ENCODE measurements at regions of chr19 and their contacts with region 1.

Region 1: GRCh38 chr19:2096480-2097329 is at the start of gene IZUMO4:
- DNase-seq: peak; percentile 98 to 100 (median 99)
- ATAC-seq: peak; percentile 90
- H3K4me3 ChIP-seq: peak within 1 kb of the TSS; percentile 82
- H3K4me3 Mint-ChIP-seq: peak within 1 kb of the TSS; percentile 95 to 98 (median 97)
- H3K27ac ChIP-seq: peak within 1 kb of the TSS; percentile 88
- H3K27ac Mint-ChIP-seq: peak within 1 kb of the TSS; percentile 90 to 98 (median 94)
- H3K4me1 ChIP-seq: peaks cover 13% of the 10 kb centered on the region in 2 donors
- H3K4me1 Mint-ChIP-seq: peaks cover 15 to 37% (median 27%) of the 10 kb centered on the region in 7 donors
- H3K27me3 ChIP-seq: no peaks in the 10 kb centered on the region
- H3K27me3 Mint-ChIP-seq: no peaks in the 10 kb centered on the region
- total RNA-seq, gene IZUMO4: 12.2 to 26.8 (median 15.7) TPM

Region 2: GRCh38 chr19:1863726-1864480 is 232.8 kb before region 1 on chr19:
- CTCF ChIA-PET with region 1: no interaction called
- POLR2A ChIA-PET with region 1: no interaction called
- intact Hi-C with region 1: loop called in 1 of 2 experiments (anchors 1 kb)
- DNase-seq: peak; percentile 89 to 96 (median 94)
- ATAC-seq: peak; percentile 84
- H3K4me3 ChIP-seq: peak overlapping the region; percentile 79
- H3K4me3 Mint-ChIP-seq: peak overlapping the region; percentile 38 to 82 (median 73)
- H3K27ac ChIP-seq: peak overlapping the region; percentile 78
- H3K27ac Mint-ChIP-seq: peak overlapping the region; percentile 15 to 86 (median 76)
- H3K4me1 ChIP-seq: peaks cover 13 to 32% of the 10 kb centered on the region in 2 donors
- H3K4me1 Mint-ChIP-seq: peaks cover 6 to 46% (median 32%) of the 10 kb centered on the region in 7 donors
- H3K27me3 ChIP-seq: no peaks in the 10 kb centered on the region
- H3K27me3 Mint-ChIP-seq: no peaks in the 10 kb centered on the region

Region 3: GRCh38 chr19:1992759-1993260 is 103.9 kb before region 1 on chr19:
- CTCF ChIA-PET with region 1: no interaction called
- POLR2A ChIA-PET with region 1: no interaction called
- intact Hi-C with region 1: no loop called
- DNase-seq: no peak
- ATAC-seq: no peak
- H3K4me3 ChIP-seq: no peak overlapping the region
- H3K4me3 Mint-ChIP-seq: no peak overlapping the region
- H3K27ac ChIP-seq: no peak overlapping the region
- H3K27ac Mint-ChIP-seq: no peak overlapping the region
- H3K4me1 ChIP-seq: no peaks in the 10 kb centered on the region
- H3K4me1 Mint-ChIP-seq: peaks cover 0 to 4% (median 0%) of the 10 kb centered on the region in 7 donors
- H3K27me3 ChIP-seq: no peaks in the 10 kb centered on the region
- H3K27me3 Mint-ChIP-seq: no peaks in the 10 kb centered on the region

Region 4: GRCh38 chr19:2016041-2016807 is 80.5 kb before region 1 on chr19:
- CTCF ChIA-PET with region 1: interaction called, 4 read pairs
- POLR2A ChIA-PET with region 1: interaction called, 9 read pairs
- intact Hi-C with region 1: loop called (anchors 1 kb)
- DNase-seq: peak in 7 of 9 donors; percentile 26 to 78 (median 56)
- ATAC-seq: peak; percentile 65
- H3K4me3 ChIP-seq: no peak overlapping the region
- H3K4me3 Mint-ChIP-seq: peak overlapping the region in 9 of 10 donors; percentile 48 to 79 (median 59)
- H3K27ac ChIP-seq: peak overlapping the region; percentile 37
- H3K27ac Mint-ChIP-seq: peak overlapping the region in 8 of 9 donors; percentile 29 to 81 (median 60)
- H3K4me1 ChIP-seq: no peaks in the 10 kb centered on the region
- H3K4me1 Mint-ChIP-seq: peaks cover 4 to 28% (median 16%) of the 10 kb centered on the region in 7 donors
- H3K27me3 ChIP-seq: no peaks in the 10 kb centered on the region
- H3K27me3 Mint-ChIP-seq: no peaks in the 10 kb centered on the region

Region 5: DNA sequence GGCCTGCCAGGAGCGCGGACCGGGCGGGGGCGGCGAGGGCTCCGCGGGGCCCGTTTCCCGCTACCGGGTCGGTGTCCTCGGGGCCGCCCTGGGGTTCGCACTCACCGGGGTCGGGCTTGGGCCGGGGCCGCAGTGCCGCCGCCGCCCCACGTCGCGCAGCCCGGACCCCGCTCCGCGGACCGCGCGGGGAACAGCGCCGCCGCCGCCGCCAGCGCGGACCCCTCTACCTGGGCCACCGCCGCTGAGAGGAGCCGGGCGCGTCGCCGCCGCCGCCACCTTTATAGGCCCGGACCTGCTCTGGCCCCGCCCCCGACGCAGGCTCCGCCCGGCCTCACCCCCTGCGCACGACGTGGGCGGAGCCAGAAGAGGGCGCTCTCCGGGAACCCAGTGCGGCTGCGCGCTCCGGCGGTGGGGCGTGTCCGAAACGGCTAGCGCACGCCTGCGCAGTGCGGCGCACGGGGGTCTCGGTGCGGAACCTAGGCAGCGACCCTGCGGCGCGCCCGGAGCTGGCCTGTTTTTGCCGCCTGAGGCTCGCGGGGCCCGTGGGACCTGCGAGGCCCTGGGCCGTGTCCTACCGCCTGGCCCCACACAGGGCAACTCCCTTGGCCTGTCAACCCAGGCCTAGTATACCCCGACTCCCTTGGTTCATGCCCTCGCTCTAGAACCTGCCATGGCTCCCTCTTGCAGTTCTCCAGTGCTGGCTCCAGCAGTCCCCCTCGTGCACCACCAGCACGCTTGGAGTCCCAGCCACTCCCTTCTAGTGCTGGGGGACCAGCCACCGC is 45.5 kb before region 1 on chr19 and contains the start of gene MKNK2:
- CTCF ChIA-PET with region 1: interaction called, 3 read pairs
- POLR2A ChIA-PET with region 1: interaction called, 28 read pairs
- intact Hi-C with region 1: loop called in 1 of 2 experiments (anchors 1 kb)
- DNase-seq: peak; percentile 89 to 100 (median 94)
- ATAC-seq: peak; percentile 91
- H3K4me3 ChIP-seq: peak within 1 kb of the TSS; percentile 98
- H3K4me3 Mint-ChIP-seq: peak within 1 kb of the TSS; percentile 83 to 90 (median 86)
- H3K27ac ChIP-seq: peak within 1 kb of the TSS; percentile 90
- H3K27ac Mint-ChIP-seq: peak within 1 kb of the TSS; percentile 87 to 96 (median 94)
- H3K4me1 ChIP-seq: peaks cover 45 to 58% of the 10 kb centered on the region in 2 donors
- H3K4me1 Mint-ChIP-seq: peaks cover 9 to 57% (median 30%) of the 10 kb centered on the region in 7 donors
- H3K27me3 ChIP-seq: no peaks in the 10 kb centered on the region
- H3K27me3 Mint-ChIP-seq: no peaks in the 10 kb centered on the region
- total RNA-seq, gene MKNK2: 190 to 347 (median 238) TPM

Region 6: GRCh38 chr19:2084993-2085720 is 11.5 kb before region 1 on chr19:
- CTCF ChIA-PET with region 1: interaction called, 11 read pairs
- POLR2A ChIA-PET with region 1: interaction called, 125 read pairs
- intact Hi-C with region 1: loop called (anchors 1 kb)
- DNase-seq: peak; percentile 68 to 97 (median 95)
- ATAC-seq: peak; percentile 86
- H3K4me3 ChIP-seq: peak overlapping the region; percentile 98
- H3K4me3 Mint-ChIP-seq: peak overlapping the region; percentile 87 to 99 (median 95)
- H3K27ac ChIP-seq: peak overlapping the region; percentile 99
- H3K27ac Mint-ChIP-seq: peak overlapping the region; percentile 92 to 99 (median 96)
- H3K4me1 ChIP-seq: peaks cover 65 to 72% of the 10 kb centered on the region in 2 donors
- H3K4me1 Mint-ChIP-seq: peaks cover 48 to 76% (median 68%) of the 10 kb centered on the region in 7 donors
- H3K27me3 ChIP-seq: no peaks in the 10 kb centered on the region
- H3K27me3 Mint-ChIP-seq: peaks cover 0 to 2% (median 0%) of the 10 kb centered on the region in 5 donors

Region 7: DNA sequence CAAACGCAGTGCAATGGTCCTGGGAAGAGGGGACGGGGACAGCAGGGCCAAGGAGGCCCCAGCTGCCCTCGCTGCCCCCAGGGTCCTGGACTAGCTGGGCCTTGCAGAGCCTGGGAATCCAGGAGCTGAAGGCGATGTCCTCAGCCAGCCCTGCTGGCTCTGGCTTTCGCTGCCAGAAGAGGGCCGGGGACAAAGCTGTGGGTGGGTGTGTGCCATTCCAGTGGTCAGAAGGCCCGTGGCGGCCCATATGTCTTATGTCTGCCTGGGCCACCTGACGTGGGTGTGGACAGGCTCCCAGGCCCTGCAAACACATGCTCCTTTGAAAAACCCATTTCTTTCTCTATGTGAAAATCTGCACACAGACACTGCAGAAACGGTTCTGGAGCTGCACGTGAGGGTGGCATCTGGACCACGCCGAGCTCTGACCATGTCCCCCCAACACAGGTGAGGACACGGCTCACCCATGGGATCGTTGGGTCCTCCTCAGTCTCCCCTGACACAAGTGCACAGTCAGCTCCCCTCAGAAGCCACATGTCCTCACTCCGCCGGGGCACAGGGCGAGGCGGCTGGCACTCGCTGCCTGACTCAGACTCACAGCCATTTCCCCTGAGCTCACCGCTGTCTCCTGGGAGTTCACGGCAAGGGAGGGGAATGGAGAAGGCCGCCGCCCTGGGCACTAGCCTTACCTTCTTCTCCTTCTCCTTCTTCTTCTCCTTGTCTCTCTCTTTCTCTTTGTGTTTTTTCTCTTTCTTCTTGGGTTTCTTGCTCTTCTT is 16.9 kb after region 1 on chr19:
- CTCF ChIA-PET with region 1: no interaction called
- POLR2A ChIA-PET with region 1: no interaction called
- intact Hi-C with region 1: no loop called
- DNase-seq: no peak
- ATAC-seq: no peak
- H3K4me3 ChIP-seq: no peak overlapping the region
- H3K4me3 Mint-ChIP-seq: no peak overlapping the region
- H3K27ac ChIP-seq: no peak overlapping the region
- H3K27ac Mint-ChIP-seq: peak overlapping the region in 4 of 9 donors; percentile 35 to 68 (median 44)
- H3K4me1 ChIP-seq: peaks cover 0 to 12% of the 10 kb centered on the region in 2 donors
- H3K4me1 Mint-ChIP-seq: peaks cover 0 to 10% (median 0%) of the 10 kb centered on the region in 7 donors
- H3K27me3 ChIP-seq: no peaks in the 10 kb centered on the region
- H3K27me3 Mint-ChIP-seq: no peaks in the 10 kb centered on the region

Region 8: DNA sequence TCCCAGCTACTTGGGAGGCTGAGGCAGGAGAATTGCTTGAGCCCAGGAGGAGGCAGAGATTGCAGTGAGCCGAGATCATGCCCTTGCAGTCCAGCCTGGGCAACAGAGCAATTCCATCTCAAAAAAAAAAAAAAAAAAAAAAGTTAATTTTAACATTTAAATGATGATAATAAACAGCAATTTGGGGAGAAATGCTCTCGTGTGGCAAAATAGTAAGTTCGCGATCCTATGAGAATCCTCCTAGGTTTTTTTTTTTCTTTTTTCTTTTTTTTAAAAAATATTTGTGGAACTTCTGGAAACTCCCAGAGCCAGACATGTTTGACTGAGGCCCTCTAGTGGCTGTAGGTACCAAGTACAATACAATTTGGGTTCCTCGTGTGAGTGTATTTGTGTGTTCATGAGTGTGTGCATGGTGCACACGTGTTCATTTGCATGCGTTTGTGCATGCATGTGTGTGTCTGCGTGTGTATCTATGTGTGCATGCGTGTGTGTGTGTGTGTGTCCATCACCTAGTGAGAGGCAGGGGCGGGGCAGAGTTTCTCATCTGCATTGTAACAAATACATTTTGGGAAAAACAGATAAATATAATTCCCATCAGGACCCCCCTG is 294.5 kb after region 1 on chr19:
- CTCF ChIA-PET with region 1: no interaction called
- POLR2A ChIA-PET with region 1: no interaction called
- intact Hi-C with region 1: no loop called
- DNase-seq: peak in 7 of 9 donors; percentile 26 to 59 (median 46)
- ATAC-seq: peak; percentile 88
- H3K4me3 ChIP-seq: no peak overlapping the region
- H3K4me3 Mint-ChIP-seq: no peak overlapping the region
- H3K27ac ChIP-seq: no peak overlapping the region
- H3K27ac Mint-ChIP-seq: peak overlapping the region in 2 of 9 donors; percentile 1 to 91
- H3K4me1 ChIP-seq: no peaks in the 10 kb centered on the region
- H3K4me1 Mint-ChIP-seq: peaks cover 4 to 16% (median 5%) of the 10 kb centered on the region in 7 donors
- H3K27me3 ChIP-seq: no peaks in the 10 kb centered on the region
- H3K27me3 Mint-ChIP-seq: peaks cover 0 to 13% (median 0%) of the 10 kb centered on the region in 5 donors

Measured in naive thymus-derived CD4-positive, alpha-beta T cell (primary cell).